ENCODE measurements at regions of chr3 and their contacts with region 1.

Region 1: GRCh38 chr3:57017459-57017845 is 43.0 kb upstream of the SPATA12 start:
- DNase-seq: peak; percentile 48 to 61
- H3K4me3 ChIP-seq: no peak overlapping the region
- H3K27ac ChIP-seq: peak overlapping the region; percentile 71
- H3K4me1 ChIP-seq: peaks cover 32% of the 10 kb centered on the region
- H3K27me3 ChIP-seq: no peaks in the 10 kb centered on the region
- CTCF ChIP-seq: no peak

Region 2: DNA sequence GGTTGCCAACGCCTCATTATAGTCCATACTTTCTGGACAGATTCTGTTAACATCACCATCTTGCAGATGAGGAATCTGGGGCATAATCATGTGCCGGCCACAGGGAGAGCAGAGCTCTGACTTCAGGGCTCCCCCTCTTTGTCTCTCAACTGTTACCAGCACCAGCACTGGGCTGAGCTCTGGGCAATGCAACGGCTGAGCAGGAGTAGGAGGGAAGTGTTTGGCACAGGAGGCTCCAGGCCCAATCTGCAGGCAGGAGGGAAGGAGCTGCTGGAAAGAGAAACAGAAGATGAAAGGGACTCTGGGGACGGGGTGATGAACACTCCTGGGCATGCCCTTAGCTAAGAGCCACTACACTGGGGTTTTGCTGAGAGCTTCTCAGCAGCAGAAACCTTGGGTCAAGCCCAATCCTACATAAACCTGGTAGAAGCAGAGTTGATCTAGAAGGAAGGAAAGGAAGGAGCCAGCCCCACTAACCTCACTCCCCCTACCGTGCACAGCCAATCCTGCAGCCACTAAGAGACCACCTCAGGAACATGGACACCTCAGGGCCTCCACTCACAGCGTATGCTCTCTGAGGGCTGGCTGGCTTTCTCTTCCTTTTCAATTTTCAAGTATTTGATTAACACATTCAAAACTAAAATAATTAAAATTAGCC is 30.1 kb before region 1 on chr3:
- CTCF ChIA-PET with region 1: no interaction called
- POLR2A ChIA-PET with region 1: no interaction called
- intact Hi-C with region 1: no loop called
- DNase-seq: no peak
- H3K4me3 ChIP-seq: no peak overlapping the region
- H3K27ac ChIP-seq: no peak overlapping the region
- H3K4me1 ChIP-seq: no peaks in the 10 kb centered on the region
- H3K27me3 ChIP-seq: no peaks in the 10 kb centered on the region
- CTCF ChIP-seq: no peak

Region 3: DNA sequence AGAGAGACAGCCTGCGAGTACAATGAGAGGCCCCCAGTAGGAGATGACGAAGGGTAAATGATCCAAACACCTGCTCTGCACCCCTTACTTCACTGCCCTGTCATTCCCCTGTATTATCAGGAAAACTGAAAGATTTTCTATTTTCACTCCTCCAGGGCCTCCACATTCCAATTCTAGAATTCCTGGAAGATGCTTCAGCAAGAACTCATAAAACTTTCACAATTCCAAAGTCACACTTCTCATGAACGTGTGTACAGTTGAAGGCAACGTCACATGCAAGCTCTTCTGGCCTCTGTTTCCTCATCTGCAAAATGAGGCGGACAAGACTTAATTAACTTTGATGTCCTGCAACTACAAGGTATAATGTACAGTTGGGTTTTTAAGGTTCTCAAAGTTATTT is 19.8 kb before region 1 on chr3:
- CTCF ChIA-PET with region 1: no interaction called
- POLR2A ChIA-PET with region 1: no interaction called
- intact Hi-C with region 1: no loop called
- DNase-seq: no peak
- H3K4me3 ChIP-seq: no peak overlapping the region
- H3K27ac ChIP-seq: no peak overlapping the region
- H3K4me1 ChIP-seq: no peaks in the 10 kb centered on the region
- H3K27me3 ChIP-seq: no peaks in the 10 kb centered on the region
- CTCF ChIP-seq: no peak

Region 4: DNA sequence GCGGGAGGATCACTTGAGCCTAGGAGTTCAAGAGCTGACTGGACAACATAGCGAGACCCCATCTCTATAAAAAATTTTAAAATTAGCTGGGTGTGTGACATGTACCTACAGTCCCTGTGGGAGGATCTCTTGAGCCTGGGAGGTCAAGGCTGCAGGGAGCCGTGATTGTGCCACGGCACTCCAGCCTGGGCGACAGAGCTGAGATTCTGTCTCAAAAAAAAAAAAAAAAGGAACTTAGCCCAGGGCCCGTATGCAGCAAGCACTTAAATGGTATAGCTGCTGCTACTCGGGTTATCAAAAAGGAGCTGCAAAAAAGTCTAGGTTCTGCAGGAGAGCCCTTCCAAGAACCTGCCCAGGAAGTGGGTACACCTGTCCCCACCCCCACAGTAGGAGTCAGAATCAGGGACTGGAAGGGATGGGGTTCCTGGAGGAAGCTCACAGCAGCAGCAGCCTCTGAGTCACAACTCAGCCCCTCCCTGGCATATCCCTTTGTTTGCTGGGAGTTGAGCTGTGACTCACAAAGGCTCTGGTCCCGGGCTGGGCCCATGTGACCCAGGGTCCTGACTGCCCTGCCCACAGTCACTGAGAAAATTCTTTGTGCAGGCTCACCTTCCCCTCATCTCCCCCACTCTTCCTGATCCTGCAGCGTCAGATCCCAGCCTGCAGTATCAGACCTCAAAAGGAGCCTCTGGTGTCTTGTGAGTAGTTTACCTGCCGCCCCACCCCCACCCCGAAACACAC is 42.8 kb after region 1 on chr3 and contains the start of gene SPATA12:
- CTCF ChIA-PET with region 1: no interaction called
- POLR2A ChIA-PET with region 1: interaction called, 5 read pairs
- intact Hi-C with region 1: loop called (anchors 1 kb)
- DNase-seq: peak; percentile 94 to 97
- H3K4me3 ChIP-seq: peak within 1 kb of the TSS; percentile 12; the same call in 1 of the 2 replicates
- H3K27ac ChIP-seq: peak within 1 kb of the TSS; percentile 96
- H3K4me1 ChIP-seq: peaks cover 45% of the 10 kb centered on the region
- H3K27me3 ChIP-seq: no peaks in the 10 kb centered on the region
- CTCF ChIP-seq: no peak
- total RNA-seq, gene SPATA12: 0.43 and 0.57 TPM in 2 replicates

Region 5: GRCh38 chr3:57078344-57078634 is 60.8 kb after region 1 on chr3:
- CTCF ChIA-PET with region 1: no interaction called
- POLR2A ChIA-PET with region 1: interaction called, 16 read pairs
- intact Hi-C with region 1: loop called (anchors 2 kb)
- DNase-seq: no peak
- H3K4me3 ChIP-seq: peak overlapping the region; percentile 95
- H3K27ac ChIP-seq: peak overlapping the region; percentile 89
- H3K4me1 ChIP-seq: peaks cover 30% of the 10 kb centered on the region
- H3K27me3 ChIP-seq: no peaks in the 10 kb centered on the region
- CTCF ChIP-seq: no peak